Aorta (tissue), 5 donors: ENCODE measurements at regions of chr1 and their contacts with region 1.

Region 1: GRCh38 chr1:150149271-150150132 is at the start of gene PLEKHO1:
- DNase-seq: peak; percentile 95 to 96
- ATAC-seq: peak; percentile 88
- H3K4me3 ChIP-seq: peak within 1 kb of the TSS; percentile 100
- H3K27ac ChIP-seq: peak within 1 kb of the TSS; percentile 85 to 100
- H3K4me1 ChIP-seq: peaks cover 0 to 1% of the 10 kb centered on the region in 2 donors
- H3K27me3 ChIP-seq: no peaks in the 10 kb centered on the region
- total RNA-seq, gene PLEKHO1: 90.6 to 146 TPM

Region 2: GRCh38 chr1:150102986-150103385 is 46.5 kb before region 1 on chr1:
- intact Hi-C with region 1: loop called in 1 of 2 experiments (anchors 5 kb)
- DNase-seq: no peak
- ATAC-seq: no peak
- H3K4me3 ChIP-seq: no peak overlapping the region
- H3K27ac ChIP-seq: no peak overlapping the region
- H3K4me1 ChIP-seq: no peaks in the 10 kb centered on the region
- H3K27me3 ChIP-seq: no peaks in the 10 kb centered on the region